ENCODE measurements at regions of chr7 and their contacts with region 1.

Region 1: DNA sequence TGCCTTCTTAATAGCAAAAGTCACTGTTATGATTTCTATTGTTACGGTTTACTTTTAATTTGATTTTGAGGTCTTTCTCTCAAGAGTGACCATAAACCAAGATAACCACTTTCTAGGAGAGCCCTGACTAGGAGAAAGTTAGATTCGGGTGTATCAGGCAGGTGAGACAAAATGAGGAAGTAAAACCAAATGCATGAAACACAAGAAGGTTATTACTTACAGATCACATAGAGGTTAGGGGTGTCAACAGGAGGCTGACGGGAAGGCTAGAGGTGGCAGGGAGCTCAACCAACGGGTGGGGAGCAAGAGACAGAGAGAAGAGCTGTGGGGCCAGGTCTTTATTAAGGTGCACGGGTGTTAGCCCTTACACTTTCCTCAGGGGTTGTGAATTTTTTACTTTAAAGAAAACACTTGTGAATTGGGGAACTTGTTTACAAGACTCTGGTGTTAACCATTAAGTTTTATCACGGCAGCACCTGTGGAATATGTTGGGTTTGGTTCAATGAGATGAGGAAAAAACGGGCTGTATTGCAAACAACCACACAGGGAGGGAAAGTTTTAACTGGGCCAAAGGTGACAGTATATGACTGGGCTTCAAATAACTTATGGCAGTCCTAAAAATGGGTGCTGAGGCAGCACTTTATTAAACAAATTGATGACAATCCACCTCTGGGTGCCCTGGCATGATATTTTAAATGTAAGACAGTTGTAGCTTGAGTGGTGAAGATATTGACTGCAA is 154.9 kb downstream of the SDHAF3 start:
- DNase-seq: no peak

Region 2: DNA sequence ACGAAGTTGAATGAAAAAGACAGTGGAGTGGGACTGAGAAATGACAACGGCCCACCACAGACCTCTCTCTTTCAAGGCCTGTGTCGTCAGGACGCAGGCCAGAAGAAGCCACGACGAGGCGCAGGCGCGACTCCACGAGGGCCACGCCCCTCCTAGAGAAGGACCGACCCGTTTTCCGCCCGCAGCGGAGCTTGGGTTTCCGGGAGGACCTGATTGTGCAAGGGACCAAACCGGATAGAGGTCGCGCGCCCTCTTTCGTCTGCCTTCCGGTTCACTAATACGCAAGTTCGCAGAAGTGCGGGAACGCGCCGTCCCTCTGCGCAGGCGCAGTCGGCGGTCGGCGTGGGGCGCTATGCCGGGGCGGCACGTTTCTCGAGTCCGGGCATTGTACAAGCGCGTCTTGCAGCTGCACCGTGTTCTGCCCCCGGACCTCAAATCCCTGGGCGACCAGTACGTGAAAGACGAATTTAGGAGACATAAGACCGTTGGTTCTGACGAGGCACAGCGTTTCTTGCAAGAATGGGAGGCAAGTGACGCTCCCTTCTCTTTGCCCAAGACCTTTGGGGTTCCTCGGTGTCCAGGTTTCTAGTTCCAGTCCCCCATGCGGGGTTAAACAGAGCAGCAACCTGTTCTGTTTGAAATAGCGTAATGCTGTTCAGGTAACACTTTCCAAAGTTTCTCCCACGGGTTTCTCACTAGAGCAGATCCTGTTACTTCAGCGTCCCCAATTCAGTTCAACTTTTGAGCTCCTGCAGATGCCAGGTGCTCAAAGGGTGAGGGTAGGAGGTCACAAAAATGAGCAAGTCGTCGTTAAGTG is 154.8 kb before region 1 on chr7 and contains the start of gene SDHAF3:
- intact Hi-C with region 1: no loop called
- DNase-seq: peak; percentile 99
- total RNA-seq, gene SDHAF3: 12.7 to 14.2 TPM

Region 3: GRCh38 chr7:98142658-98143057 is 870.3 kb after region 1 on chr7:
- intact Hi-C with region 1: loop called in 1 of 2 experiments (anchors 5 kb)
- DNase-seq: no peak

Measured in posterior vena cava (tissue), 2 donors.